Activated T-helper 2 cell treated with anti-CD3 and anti-CD28 coated beads, Interferon-gamma antibody, Interleukin-2, Interleukin-4, amounts not matched to agents 10 μg/mL and 5 μg/mL and 100 μg/mL, durations not matched to agents 14 hours and 24 hours and 36 hours (primary cell): ENCODE measurements at regions of chr4 and their contacts with region 1.

Region 1: GRCh38 chr4:48766131-48766792 is 13.8 kb downstream of the FRYL start:
- DNase-seq: no peak
- H3K4me3 Mint-ChIP-seq: no peak overlapping the region
- H3K27ac Mint-ChIP-seq: no peak overlapping the region
- H3K4me1 Mint-ChIP-seq: peaks cover 39% of the 10 kb centered on the region
- H3K27me3 Mint-ChIP-seq: no peaks in the 10 kb centered on the region

Region 2: DNA sequence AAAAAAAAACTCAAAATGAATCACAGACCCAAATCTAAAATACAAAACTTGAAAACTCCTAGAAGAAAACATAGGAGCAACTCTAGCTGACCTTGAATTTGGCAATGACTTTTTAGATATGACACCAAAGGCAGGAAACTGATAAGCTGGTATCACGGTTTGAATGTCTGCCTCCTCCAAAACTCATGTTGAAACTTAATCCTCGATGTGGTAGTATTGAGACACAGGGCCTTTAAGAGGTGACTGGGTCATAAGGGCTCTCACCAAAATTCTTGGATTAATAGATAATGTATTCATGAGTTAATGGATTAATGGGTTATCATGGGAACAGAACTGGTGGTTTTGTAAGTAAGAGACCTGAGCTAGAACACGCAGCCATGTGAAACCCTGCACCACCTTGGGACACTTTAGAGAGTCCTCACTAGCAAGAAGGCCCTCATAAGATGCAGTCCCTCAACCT is 26.7 kb before region 1 on chr4:
- intact Hi-C with region 1: loop called (anchors 2 kb)
- DNase-seq: no peak
- H3K4me3 Mint-ChIP-seq: no peak overlapping the region
- H3K27ac Mint-ChIP-seq: peak overlapping the region; percentile 62
- H3K4me1 Mint-ChIP-seq: peaks cover 54% of the 10 kb centered on the region
- H3K27me3 Mint-ChIP-seq: no peaks in the 10 kb centered on the region